ENCODE measurements at regions of chr9 and their contacts with region 1.

Region 1: DNA sequence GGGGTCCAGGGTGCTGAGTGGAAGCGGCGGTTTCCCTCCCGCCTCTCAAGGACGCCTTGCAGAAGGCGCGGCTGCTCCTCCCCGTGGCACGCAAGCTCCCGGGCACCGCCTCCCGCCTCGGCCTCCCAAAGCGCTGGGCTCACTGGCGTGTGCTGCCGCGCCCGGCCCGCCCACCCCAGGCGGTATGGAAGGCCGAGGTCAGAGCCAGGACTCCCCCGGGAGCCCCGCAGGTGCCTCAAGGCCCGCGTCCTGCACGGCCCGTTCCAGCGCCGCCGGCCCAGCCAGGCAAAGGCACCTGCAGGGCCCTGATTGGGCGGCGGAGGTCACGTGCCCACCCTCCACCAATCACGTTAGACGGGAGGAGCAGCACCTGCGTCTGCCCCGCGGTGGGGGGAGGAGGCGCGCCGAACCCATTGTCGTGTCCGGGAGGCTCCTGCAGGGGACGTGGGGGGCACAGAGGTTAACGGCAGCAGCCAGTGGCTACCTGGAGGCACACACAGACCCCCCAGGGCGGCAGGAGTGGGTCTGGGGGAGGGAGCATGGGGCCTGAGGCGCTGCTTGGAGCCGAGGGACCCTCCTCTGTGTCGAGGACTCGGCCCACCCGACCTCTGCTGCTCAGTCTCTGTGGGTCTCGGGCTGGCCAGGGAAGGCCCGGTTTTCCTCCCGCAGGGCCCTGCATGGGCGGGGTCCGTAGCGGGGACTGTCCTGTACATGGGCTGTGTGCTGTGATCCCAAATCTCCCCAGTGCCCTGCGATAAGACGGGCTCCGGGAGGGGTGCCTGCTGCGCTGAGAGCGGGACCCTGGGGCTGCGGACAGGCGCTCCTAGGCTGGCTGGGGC is 2.0 kb upstream of the LCN12 start:
- DNase-seq: peak; percentile 96 to 99 (median 97)
- H3K4me3 ChIP-seq: peak overlapping the region; percentile 34 to 71 (median 58)
- H3K27ac ChIP-seq: peak overlapping the region; percentile 89
- H3K4me1 ChIP-seq: peaks cover 0 to 14% (median 9%) of the 10 kb centered on the region in 3 donors
- H3K27me3 ChIP-seq: no peaks in the 10 kb centered on the region
- CTCF ChIP-seq: peak; percentile 12

Region 2: GRCh38 chr9:137029058-137029936 is 79.3 kb after region 1 on chr9:
- intact Hi-C with region 1: loop called (anchors 10 kb)
- DNase-seq: peak; percentile 58 to 91 (median 70)
- H3K4me3 ChIP-seq: peak overlapping the region in 1 of 3 donors; percentile 57
- H3K27ac ChIP-seq: no peak overlapping the region
- H3K4me1 ChIP-seq: peaks cover 0 to 39% (median 20%) of the 10 kb centered on the region in 3 donors
- H3K27me3 ChIP-seq: no peaks in the 10 kb centered on the region
- CTCF ChIP-seq: peak; percentile 76

Measured in kidney (tissue), 22 donors.